Dendritic cell treated with granulocyte-macrophage colony-stimulating factor and Interleukin-4, amounts not matched to agents 40 ng/mL and 50 ng/mL, for 4 days (primary cell): ENCODE measurements at regions of chr11 and their contacts with region 1.

Region 1: GRCh38 chr11:121249039-121249663 is 43.4 kb upstream of the SC5D start:
- H3K4me3 Mint-ChIP-seq: no peak overlapping the region
- H3K27ac Mint-ChIP-seq: no peak overlapping the region
- H3K4me1 Mint-ChIP-seq: no peaks in the 10 kb centered on the region
- H3K27me3 Mint-ChIP-seq: peaks cover 6% of the 10 kb centered on the region

Region 2: DNA sequence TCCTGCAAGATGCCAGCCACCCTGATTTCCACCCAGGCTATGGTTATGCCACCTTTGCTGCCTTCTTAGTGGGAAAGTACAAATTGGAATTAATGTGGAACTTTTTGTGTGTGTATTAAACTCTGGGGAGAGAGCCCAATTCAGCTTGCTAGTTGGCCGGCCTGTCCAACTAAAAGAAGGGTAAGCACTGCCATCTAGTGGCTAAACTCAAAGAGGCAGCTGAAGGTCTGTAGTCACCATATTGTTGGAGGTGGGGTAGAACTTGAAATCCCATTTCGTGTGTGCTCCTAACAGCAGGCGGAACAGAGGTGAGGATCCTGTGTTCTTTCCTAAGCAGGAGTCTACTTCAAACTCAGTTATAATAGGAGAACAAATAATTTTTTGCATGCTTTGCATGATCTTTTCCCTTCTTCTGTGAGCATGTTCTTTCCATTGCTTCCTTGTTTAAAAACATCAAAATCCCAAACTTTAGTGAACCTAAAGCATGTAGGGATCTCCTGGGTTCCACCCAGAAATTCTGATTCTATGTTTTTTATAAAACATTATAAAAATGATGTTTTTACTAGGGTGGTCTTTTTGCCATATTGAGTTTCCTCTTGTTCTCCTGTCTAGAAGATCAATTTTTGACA is 342.4 kb after region 1 on chr11:
- intact Hi-C with region 1: loop called (anchors 1 kb)
- H3K4me3 Mint-ChIP-seq: no peak overlapping the region
- H3K27ac Mint-ChIP-seq: no peak overlapping the region
- H3K4me1 Mint-ChIP-seq: peaks cover 40% of the 10 kb centered on the region
- H3K27me3 Mint-ChIP-seq: no peaks in the 10 kb centered on the region